Posterior vena cava (tissue), 2 donors: ENCODE measurements at regions of chr12 and their contacts with region 1.

Region 1: GRCh38 chr12:8949342-8950220 is at the start of gene M6PR:
- DNase-seq: peak; percentile 98
- total RNA-seq, gene M6PR: 78.4 to 83.6 TPM

Region 2: DNA sequence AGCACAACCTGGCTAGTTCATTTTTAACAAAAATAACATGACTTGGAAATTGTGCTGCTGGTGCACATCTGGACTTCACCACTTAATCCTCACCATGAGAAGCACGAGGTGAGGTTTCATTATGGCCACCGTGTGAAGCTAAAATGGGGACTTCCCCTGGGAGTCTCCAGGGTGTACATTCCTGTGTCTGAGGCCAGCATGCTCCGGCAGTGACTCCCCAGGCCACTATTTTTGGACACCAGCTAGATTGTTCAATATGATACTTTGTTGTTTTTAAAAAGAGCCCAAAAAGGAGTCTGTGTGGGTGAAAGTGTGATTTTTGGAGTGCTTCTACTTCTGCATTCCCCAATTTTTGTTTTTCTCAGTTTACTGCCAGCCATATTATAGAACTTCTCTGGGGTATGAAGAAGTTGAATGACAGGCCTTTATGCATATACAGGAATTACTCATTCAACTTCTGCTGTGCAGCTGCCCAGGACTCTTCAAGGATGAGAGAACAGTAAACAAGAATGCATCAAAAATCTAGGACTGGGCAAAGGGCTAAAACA is 320.0 kb before region 1 on chr12:
- intact Hi-C with region 1: no loop called
- DNase-seq: no peak

Region 3: DNA sequence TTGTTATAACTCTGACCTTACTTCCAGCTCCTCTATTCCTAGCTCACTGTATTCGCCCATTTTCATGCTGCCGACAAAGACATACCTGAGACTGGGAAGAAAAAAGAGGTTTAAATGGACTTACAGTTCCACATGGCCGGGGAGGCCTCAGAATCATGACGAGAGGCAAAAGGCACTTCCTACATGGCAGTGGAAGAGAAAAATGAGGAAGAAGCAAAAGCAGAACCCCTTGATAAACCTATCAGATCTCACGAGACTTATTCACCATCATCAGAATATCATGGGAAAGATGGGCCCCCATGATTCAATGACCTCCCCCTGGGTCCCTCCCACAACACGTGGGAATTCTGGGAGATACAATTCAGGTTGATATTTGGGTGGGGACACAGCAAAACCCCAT is 49.8 kb before region 1 on chr12:
- intact Hi-C with region 1: no loop called
- DNase-seq: no peak

Region 4: DNA sequence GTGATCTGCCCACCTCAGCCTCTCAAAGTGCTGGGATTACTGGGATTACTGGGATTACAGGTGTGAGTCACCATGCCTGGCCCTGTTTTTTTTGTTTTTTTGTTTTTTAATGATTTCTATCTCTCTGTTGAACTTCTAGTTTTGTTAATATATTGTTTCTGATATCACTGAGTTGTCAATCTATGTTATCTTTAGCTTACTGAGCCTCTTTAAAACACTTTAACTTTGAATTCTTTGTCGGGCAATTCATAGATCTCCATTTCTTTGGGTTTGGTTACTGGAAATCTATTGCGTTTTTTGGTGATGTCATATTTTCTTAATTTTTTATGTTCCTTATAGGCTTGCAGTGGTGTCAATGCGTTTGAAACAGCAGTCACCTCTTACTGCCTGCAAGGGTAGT is 30.6 kb after region 1 on chr12:
- intact Hi-C with region 1: no loop called
- DNase-seq: no peak

Region 5: GRCh38 chr12:9039397-9039977 is 89.9 kb after region 1 on chr12:
- intact Hi-C with region 1: loop called in 1 of 2 experiments (anchors 10 kb)
- DNase-seq: no peak